ENCODE measurements at regions of chr13 and their contacts with region 1.

Region 1: GRCh38 chr13:44648392-44649103 is 72.4 kb upstream of the TSC22D1 start:
- DNase-seq: no peak
- H3K4me3 Mint-ChIP-seq: no peak overlapping the region
- H3K27ac Mint-ChIP-seq: peak overlapping the region; percentile 29
- H3K4me1 Mint-ChIP-seq: peaks cover 14% of the 10 kb centered on the region
- H3K27me3 Mint-ChIP-seq: peaks cover 6% of the 10 kb centered on the region

Region 2: DNA sequence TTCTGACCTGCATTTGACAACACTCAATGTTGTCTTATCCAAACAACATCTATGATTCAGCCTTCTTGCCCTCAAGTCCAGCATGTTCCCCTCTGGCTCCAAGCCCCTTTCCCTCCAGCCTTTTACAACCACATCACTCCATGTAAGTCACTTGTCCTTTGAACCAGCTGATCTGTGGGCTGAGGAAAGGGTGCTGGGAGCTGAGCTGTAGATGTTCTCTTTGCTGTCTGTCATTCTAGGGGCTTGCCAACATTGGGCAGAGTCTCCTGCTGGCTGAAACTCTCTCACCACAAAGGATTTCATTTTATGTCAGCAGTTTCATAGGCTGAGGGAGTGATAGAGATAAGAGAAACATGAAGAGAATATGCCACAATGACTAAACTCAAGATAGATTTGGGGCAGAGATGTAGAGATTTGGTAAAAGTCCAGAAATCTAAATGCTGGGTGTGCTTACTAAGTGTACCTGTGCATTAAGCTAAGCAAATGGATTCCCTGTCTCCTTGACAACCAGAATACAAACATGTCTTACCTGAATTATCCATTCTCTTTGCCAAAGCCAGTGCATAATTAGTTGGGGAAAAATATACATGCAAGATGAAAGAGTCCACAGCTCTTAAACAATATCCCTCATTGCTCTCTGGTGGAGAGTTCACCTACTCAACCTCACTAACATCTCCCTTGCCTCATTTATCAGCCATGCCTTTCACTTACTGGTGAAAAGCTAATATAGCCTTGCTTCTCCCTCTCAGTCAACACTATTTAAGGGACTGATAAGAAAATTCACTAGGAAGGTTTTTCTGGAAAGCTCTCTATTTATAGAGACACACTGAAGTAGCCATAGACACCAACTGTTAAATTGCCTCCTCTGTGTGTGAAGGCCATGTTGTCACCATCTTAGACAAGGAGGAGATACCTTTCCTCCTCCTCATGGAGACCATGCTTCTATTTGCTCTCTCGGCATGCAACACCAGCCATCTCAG is 450.5 kb before region 1 on chr13:
- intact Hi-C with region 1: loop called (anchors 2 kb)
- DNase-seq: peak; percentile 78
- H3K4me3 Mint-ChIP-seq: no peak overlapping the region
- H3K27ac Mint-ChIP-seq: peak overlapping the region; percentile 34
- H3K4me1 Mint-ChIP-seq: peaks cover 28% of the 10 kb centered on the region
- H3K27me3 Mint-ChIP-seq: peaks cover 43% of the 10 kb centered on the region

Region 3: GRCh38 chr13:44484562-44485138 is 163.9 kb before region 1 on chr13:
- intact Hi-C with region 1: loop called (anchors 5 kb)
- DNase-seq: peak; percentile 60
- H3K4me3 Mint-ChIP-seq: peak overlapping the region; percentile 64
- H3K27ac Mint-ChIP-seq: no peak overlapping the region
- H3K4me1 Mint-ChIP-seq: peaks cover 8% of the 10 kb centered on the region
- H3K27me3 Mint-ChIP-seq: peaks cover 3% of the 10 kb centered on the region

Region 4: DNA sequence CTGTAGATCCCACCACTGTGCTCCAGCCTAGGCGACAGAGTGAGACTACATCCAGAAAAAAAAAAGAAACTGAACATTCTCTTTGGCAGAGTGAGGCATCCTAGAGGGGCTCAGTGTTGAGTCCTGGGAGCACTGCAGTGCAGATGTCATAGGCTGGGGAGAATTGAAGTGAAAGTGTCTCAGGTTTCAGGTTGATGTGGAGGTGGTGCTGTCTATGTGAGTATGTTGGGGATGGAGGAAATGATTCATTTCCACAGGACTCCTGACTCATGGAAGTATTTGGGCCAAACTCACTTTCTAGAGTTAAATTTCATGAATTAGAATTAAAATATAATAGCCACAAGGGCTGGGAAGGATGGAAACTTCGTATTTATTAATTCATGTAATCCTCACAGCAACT is 62.0 kb after region 1 on chr13:
- intact Hi-C with region 1: loop called (anchors 1 kb)
- DNase-seq: no peak
- H3K4me3 Mint-ChIP-seq: no peak overlapping the region
- H3K27ac Mint-ChIP-seq: no peak overlapping the region
- H3K4me1 Mint-ChIP-seq: peaks cover 14% of the 10 kb centered on the region
- H3K27me3 Mint-ChIP-seq: peaks cover 18% of the 10 kb centered on the region

Region 5: GRCh38 chr13:44768239-44768638 is 119.7 kb after region 1 on chr13:
- intact Hi-C with region 1: loop called (anchors 1 kb)
- DNase-seq: peak; percentile 88
- H3K4me3 Mint-ChIP-seq: peak overlapping the region; percentile 54
- H3K27ac Mint-ChIP-seq: peak overlapping the region; percentile 79
- H3K4me1 Mint-ChIP-seq: peaks cover 35% of the 10 kb centered on the region
- H3K27me3 Mint-ChIP-seq: no peaks in the 10 kb centered on the region

Region 6: DNA sequence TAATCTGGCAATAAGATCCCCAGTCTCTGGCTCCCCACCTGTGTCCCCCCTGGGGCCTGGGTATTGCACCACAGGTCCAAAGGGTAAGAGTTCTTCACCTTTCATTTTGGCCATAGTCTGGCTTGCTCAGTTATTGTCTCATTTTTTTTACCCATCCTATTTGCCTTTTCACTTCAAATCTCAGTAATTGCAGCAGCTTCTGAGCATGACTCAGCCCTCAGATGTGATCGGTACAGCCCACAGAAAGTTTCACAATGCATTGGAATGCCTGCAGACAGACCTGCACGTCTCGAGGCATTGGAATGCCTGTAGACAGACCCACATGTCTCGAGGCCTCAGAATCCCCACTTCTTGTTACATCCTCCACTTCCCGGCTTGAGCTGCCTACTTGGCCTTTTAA is 167.1 kb after region 1 on chr13:
- intact Hi-C with region 1: loop called (anchors 2 kb)
- DNase-seq: peak; percentile 71
- H3K4me3 Mint-ChIP-seq: no peak overlapping the region
- H3K27ac Mint-ChIP-seq: no peak overlapping the region
- H3K4me1 Mint-ChIP-seq: peaks cover 16% of the 10 kb centered on the region
- H3K27me3 Mint-ChIP-seq: peaks cover 29% of the 10 kb centered on the region

Measured in activated CD4-positive, alpha-beta T cell treated with anti-CD3 and anti-CD28 coated beads, Interleukin-2, amount 10 ng/mL, durations not matched to agents 24 days and 14 days (primary cell).